GM12878 (cell line): ENCODE measurements at regions of chr5 and their contacts with region 1.

Region 1: GRCh38 chr5:173972925-173973615 is 15.9 kb upstream of the C5orf47 start:
- DNase-seq: peak; percentile 40
- ATAC-seq: peak; percentile 92
- H3K4me3 ChIP-seq: peak overlapping the region; percentile 66
- H3K27ac ChIP-seq: no peak overlapping the region
- H3K4me1 ChIP-seq: peaks cover 12% of the 10 kb centered on the region
- H3K27me3 ChIP-seq: no peaks in the 10 kb centered on the region
- CTCF ChIP-seq: peak; percentile 77 to 88 (median 82); a peak in 5 of 6 replicates
- EP300 ChIP-seq: no peak
- POLR2A ChIP-seq: no peak
- RAD21 ChIP-seq: peak; percentile 84

Region 2: GRCh38 chr5:173625696-173626504 is 347.2 kb before region 1 on chr5:
- CTCF ChIA-PET with region 1: interaction called, 242 read pairs
- POLR2A ChIA-PET with region 1: no interaction called
- RAD21 ChIA-PET with region 1: interaction called, 9 read pairs
- SMC1A ChIA-PET with region 1: interaction called, 171 read pairs
- in situ Hi-C with region 1: loop called (anchors 5 kb)
- intact Hi-C with region 1: no loop called
- DNase-seq: no peak
- ATAC-seq: peak; percentile 81
- H3K4me3 ChIP-seq: no peak overlapping the region
- H3K27ac ChIP-seq: no peak overlapping the region
- H3K4me1 ChIP-seq: peaks cover 9% of the 10 kb centered on the region
- H3K27me3 ChIP-seq: no peaks in the 10 kb centered on the region
- CTCF ChIP-seq: peak; percentile 60 to 71 (median 61)
- EP300 ChIP-seq: no peak
- POLR2A ChIP-seq: no peak
- RAD21 ChIP-seq: peak; percentile 85

Region 3: GRCh38 chr5:173736923-173737412 is 236.1 kb before region 1 on chr5:
- CTCF ChIA-PET with region 1: interaction called, 3 read pairs
- POLR2A ChIA-PET with region 1: no interaction called
- RAD21 ChIA-PET with region 1: no interaction called
- SMC1A ChIA-PET with region 1: no interaction called
- in situ Hi-C with region 1: no loop called
- intact Hi-C with region 1: loop called (anchors 5 kb)
- DNase-seq: peak; percentile 76
- ATAC-seq: peak; percentile 91
- H3K4me3 ChIP-seq: peak overlapping the region; percentile 30; the same call in 1 of the 2 replicates
- H3K27ac ChIP-seq: peak overlapping the region; percentile 76
- H3K4me1 ChIP-seq: peaks cover 63% of the 10 kb centered on the region
- H3K27me3 ChIP-seq: no peaks in the 10 kb centered on the region
- CTCF ChIP-seq: no peak
- EP300 ChIP-seq: peak; percentile 47 to 49; a peak in 1 of 4 replicates
- POLR2A ChIP-seq: peak; percentile 48; the same call in 1 of the 2 replicates
- RAD21 ChIP-seq: 0 out of 2 replicates have a peak, but pooled peaks have one; percentile 10

Region 4: GRCh38 chr5:173935396-173935795 is 37.7 kb before region 1 on chr5:
- CTCF ChIA-PET with region 1: interaction called, 10 read pairs
- POLR2A ChIA-PET with region 1: interaction called, 3 read pairs
- RAD21 ChIA-PET with region 1: interaction called, 5 read pairs
- SMC1A ChIA-PET with region 1: interaction called, 10 read pairs
- in situ Hi-C with region 1: no loop called
- intact Hi-C with region 1: no loop called
- DNase-seq: no peak
- ATAC-seq: no peak
- H3K4me3 ChIP-seq: no peak overlapping the region
- H3K27ac ChIP-seq: no peak overlapping the region
- H3K4me1 ChIP-seq: no peaks in the 10 kb centered on the region
- H3K27me3 ChIP-seq: no peaks in the 10 kb centered on the region
- CTCF ChIP-seq: no peak
- EP300 ChIP-seq: no peak
- POLR2A ChIP-seq: no peak
- RAD21 ChIP-seq: no peak

Region 5: GRCh38 chr5:173997331-173997730 is 24.3 kb after region 1 on chr5:
- CTCF ChIA-PET with region 1: no interaction called
- POLR2A ChIA-PET with region 1: no interaction called
- RAD21 ChIA-PET with region 1: no interaction called
- SMC1A ChIA-PET with region 1: no interaction called
- in situ Hi-C with region 1: no loop called
- intact Hi-C with region 1: no loop called
- DNase-seq: no peak
- ATAC-seq: no peak
- H3K4me3 ChIP-seq: no peak overlapping the region
- H3K27ac ChIP-seq: no peak overlapping the region
- H3K4me1 ChIP-seq: no peaks in the 10 kb centered on the region
- H3K27me3 ChIP-seq: no peaks in the 10 kb centered on the region; a peak in 1 of 4 replicates
- CTCF ChIP-seq: no peak
- EP300 ChIP-seq: no peak
- POLR2A ChIP-seq: no peak
- RAD21 ChIP-seq: no peak

Region 6: DNA sequence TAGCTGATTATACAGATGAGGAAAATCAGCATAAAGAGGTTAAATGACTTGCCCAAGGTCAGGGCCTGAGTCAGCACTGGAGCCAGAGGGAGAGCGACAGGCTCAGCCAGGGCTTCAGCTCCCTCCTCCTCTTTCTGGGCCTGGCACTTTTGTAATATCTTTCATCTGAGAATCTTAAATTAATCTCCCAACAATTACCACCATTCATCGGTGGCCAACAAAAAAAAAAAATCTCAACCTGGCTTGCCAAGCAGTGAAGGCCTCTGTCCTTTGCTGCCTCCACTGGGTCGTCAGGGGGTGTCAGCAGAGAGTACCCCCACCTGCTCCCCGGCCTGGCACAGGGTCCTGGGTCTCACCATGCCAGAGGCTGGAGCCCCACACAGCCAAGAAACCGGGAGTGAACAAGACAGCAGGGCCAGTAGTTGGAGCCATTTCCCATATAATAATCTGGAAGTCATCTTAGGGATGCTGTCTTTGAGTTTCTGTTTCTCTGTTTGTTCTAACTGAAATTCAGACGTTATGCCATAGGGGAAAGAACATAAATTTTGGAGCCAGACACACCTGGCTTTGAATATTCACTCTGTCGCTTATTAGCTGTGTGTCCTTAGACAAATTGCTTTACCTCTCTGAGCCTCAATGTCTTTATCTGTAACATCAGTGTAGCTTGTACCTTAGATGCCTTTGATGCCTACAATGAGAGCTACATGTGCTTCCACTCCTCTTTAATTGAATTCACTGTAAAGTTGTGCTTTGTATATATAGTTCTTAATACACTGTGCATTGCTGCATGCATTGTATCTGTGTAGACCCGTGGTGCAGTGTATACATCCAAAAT is 451.4 kb after region 1 on chr5:
- CTCF ChIA-PET with region 1: no interaction called
- POLR2A ChIA-PET with region 1: no interaction called
- RAD21 ChIA-PET with region 1: no interaction called
- SMC1A ChIA-PET with region 1: no interaction called
- in situ Hi-C with region 1: no loop called
- intact Hi-C with region 1: no loop called
- DNase-seq: no peak
- ATAC-seq: no peak
- H3K4me3 ChIP-seq: no peak overlapping the region
- H3K27ac ChIP-seq: no peak overlapping the region
- H3K4me1 ChIP-seq: no peaks in the 10 kb centered on the region
- H3K27me3 ChIP-seq: peaks cover 0 to 5% of the 10 kb centered on the region in 2 experiments; a peak in 2 of 4 replicates
- CTCF ChIP-seq: no peak
- EP300 ChIP-seq: no peak
- POLR2A ChIP-seq: no peak
- RAD21 ChIP-seq: no peak